CD8-positive, alpha-beta memory T cell (primary cell): ENCODE measurements at regions of chr1 and their contacts with region 1.

Region 1: DNA sequence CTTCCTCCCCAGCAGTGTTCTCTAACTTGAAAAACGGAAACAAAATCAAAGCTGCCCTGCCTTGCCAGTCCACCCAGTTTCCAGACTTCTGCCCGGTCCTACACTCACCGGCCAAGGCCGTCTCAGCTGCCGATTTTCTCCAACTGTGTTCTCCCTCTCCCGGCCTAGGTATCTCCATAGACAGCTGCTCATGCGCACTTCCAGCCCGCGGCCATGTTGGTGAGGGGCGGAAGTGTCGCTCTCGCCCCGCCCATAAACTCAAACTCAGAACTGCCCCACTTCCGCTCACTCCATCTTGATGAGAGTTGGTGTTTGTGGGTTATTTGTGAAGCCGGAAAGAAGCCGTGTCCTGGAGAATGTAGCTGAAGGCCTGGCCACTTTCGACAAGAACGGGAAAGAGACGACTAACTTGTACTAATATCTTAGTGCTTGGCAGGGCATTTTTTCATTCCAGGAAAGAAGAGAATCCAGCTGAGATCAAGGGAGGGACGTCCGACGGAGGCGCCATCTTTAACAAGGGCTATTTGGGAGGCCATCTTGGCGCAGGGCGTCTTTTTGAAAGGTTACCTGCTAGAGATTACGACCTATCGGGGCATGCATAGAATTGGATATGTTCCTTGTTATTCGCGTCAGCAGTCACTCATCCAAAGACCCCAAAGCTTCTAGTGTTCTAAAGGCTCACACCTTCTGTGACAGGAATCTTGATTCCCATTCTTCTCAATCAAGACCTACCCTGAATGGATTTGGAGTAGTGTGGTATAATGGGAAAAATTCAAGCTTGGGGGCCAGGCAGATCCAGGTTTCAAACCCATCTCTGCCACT is at the start of gene USF1:
- DNase-seq: peak; percentile 85 to 96 (median 93)
- H3K4me3 ChIP-seq: peak within 1 kb of the TSS; percentile 99
- H3K4me3 Mint-ChIP-seq: peak within 1 kb of the TSS; percentile 88 to 97 (median 92)
- H3K27ac ChIP-seq: peak within 1 kb of the TSS; percentile 94
- H3K27ac Mint-ChIP-seq: peak within 1 kb of the TSS; percentile 89 to 100 (median 99)
- H3K4me1 ChIP-seq: peaks cover 23% of the 10 kb centered on the region
- H3K4me1 Mint-ChIP-seq: peaks cover 32 to 62% (median 49%) of the 10 kb centered on the region in 3 donors
- H3K27me3 ChIP-seq: no peaks in the 10 kb centered on the region
- H3K27me3 Mint-ChIP-seq: no peaks in the 10 kb centered on the region
- total RNA-seq, gene USF1: 63.3 to 67.7 TPM

Region 2: GRCh38 chr1:160963521-160963920 is 82.4 kb before region 1 on chr1:
- CTCF ChIA-PET with region 1: no interaction called
- POLR2A ChIA-PET with region 1: no interaction called
- DNase-seq: no peak
- H3K4me3 ChIP-seq: no peak overlapping the region
- H3K4me3 Mint-ChIP-seq: no peak overlapping the region
- H3K27ac ChIP-seq: no peak overlapping the region
- H3K27ac Mint-ChIP-seq: no peak overlapping the region
- H3K4me1 ChIP-seq: no peaks in the 10 kb centered on the region
- H3K4me1 Mint-ChIP-seq: no peaks in the 10 kb centered on the region
- H3K27me3 ChIP-seq: no peaks in the 10 kb centered on the region
- H3K27me3 Mint-ChIP-seq: peaks cover 0 to 4% of the 10 kb centered on the region in 2 donors

Region 3: GRCh38 chr1:161013488-161014230 is 32.3 kb before region 1 on chr1:
- CTCF ChIA-PET with region 1: interaction called, 6 read pairs
- POLR2A ChIA-PET with region 1: interaction called, 15 read pairs
- DNase-seq: peak; percentile 39 to 76 (median 60)
- H3K4me3 ChIP-seq: peak overlapping the region; percentile 65
- H3K4me3 Mint-ChIP-seq: peak overlapping the region; percentile 67 to 90 (median 84)
- H3K27ac ChIP-seq: peak overlapping the region; percentile 71
- H3K27ac Mint-ChIP-seq: peak overlapping the region; percentile 90 to 99 (median 96)
- H3K4me1 ChIP-seq: peaks cover 34% of the 10 kb centered on the region
- H3K4me1 Mint-ChIP-seq: peaks cover 21 to 46% (median 27%) of the 10 kb centered on the region in 3 donors
- H3K27me3 ChIP-seq: no peaks in the 10 kb centered on the region
- H3K27me3 Mint-ChIP-seq: no peaks in the 10 kb centered on the region

Region 4: DNA sequence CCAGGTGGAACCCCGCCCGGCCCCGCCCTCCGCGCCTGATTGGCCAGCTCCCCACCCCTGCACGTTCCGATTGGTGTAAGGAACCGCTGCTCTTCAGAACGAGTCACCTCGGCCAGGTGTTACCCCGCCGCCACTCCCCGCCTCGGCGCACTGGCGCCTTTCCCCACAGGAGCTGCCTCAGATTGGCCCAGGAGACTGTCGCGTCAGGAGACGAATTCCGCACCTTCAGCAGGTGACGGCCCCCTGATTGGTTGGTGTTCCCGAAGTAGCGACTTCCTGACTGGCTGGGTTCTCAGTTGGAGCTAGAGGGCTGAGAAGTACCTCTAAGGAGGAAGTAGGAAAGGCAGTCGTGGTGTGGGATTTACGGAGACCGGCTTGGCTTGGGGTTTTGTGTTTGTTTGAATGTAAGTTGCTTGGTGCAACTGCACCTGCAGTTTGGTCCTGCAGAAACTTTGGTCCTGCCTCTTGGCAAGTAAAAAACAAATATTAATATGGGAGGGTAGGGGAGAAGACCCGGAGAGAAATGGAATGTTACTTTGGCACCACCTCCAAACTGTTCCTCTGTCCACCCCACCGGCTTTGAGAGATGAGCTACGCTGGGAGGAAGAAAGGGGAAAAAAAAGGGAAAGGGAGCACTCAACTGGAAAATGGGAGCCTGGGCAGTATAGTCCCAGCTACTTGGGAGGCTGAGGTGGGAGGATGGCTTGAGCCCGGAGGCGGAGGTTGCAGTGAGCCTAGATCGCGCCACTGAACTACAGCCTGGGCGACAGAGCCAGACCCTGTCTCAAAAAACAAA is 24.6 kb before region 1 on chr1:
- CTCF ChIA-PET with region 1: interaction called, 6 read pairs
- POLR2A ChIA-PET with region 1: interaction called, 18 read pairs
- DNase-seq: peak; percentile 85 to 95 (median 91)
- H3K4me3 ChIP-seq: peak overlapping the region; percentile 99
- H3K4me3 Mint-ChIP-seq: peak overlapping the region; percentile 85 to 94 (median 91)
- H3K27ac ChIP-seq: peak overlapping the region; percentile 71
- H3K27ac Mint-ChIP-seq: peak overlapping the region; percentile 66 to 97 (median 95)
- H3K4me1 ChIP-seq: peaks cover 26% of the 10 kb centered on the region
- H3K4me1 Mint-ChIP-seq: peaks cover 19 to 60% (median 40%) of the 10 kb centered on the region in 3 donors
- H3K27me3 ChIP-seq: no peaks in the 10 kb centered on the region
- H3K27me3 Mint-ChIP-seq: no peaks in the 10 kb centered on the region

Region 5: GRCh38 chr1:161071886-161072371 is 26.0 kb after region 1 on chr1:
- CTCF ChIA-PET with region 1: interaction called, 69 read pairs
- POLR2A ChIA-PET with region 1: interaction called, 81 read pairs
- DNase-seq: peak in 4 of 5 donors; percentile 24 to 66 (median 41)
- H3K4me3 ChIP-seq: no peak overlapping the region
- H3K4me3 Mint-ChIP-seq: peak overlapping the region in 1 of 7 donors; percentile 59
- H3K27ac ChIP-seq: no peak overlapping the region
- H3K27ac Mint-ChIP-seq: peak overlapping the region in 7 of 8 donors; percentile 17 to 88 (median 70)
- H3K4me1 ChIP-seq: peaks cover 34% of the 10 kb centered on the region
- H3K4me1 Mint-ChIP-seq: peaks cover 33 to 42% (median 41%) of the 10 kb centered on the region in 3 donors
- H3K27me3 ChIP-seq: no peaks in the 10 kb centered on the region
- H3K27me3 Mint-ChIP-seq: peaks cover 0 to 2% of the 10 kb centered on the region in 2 donors

Region 6: DNA sequence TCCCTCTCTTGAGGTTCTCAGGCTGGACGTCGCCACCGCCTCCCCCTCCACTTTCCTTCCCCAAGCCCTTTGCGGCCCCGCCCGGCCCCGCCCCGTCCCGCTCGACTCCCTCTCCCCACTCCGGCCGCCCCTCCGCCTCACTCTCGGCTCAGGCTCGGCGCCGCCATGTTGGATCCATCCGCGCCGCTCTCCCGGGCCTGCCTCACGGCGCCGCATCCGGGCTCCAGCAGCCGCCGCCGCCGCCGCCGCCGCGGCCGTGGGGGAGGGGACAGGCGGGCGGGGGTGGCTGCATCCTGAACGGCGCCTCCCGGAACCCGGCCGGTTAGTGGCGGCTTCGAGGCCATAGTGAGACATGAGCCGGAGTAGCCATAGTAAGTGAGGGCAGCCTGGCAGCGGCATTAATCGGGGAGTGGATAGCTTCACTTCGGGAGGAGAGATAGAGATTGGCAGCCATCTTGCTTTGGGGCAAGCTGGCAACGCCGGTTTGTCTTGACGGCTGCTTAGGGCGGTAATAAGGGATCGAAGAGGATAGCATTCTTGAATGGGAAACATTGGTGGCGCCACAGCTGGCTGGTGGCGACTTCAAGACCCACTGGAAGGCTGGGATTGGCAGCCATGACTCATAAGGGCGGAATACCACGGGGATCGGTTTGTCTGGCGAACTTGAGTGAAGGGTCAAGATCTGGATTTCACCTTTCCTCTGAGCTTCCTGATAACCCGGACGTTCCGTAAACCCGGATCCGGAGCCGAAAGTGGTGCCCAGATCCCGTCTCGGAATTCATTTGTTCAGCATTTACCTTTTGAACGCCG is 86.7 kb after region 1 on chr1 and contains the start of gene DEDD:
- CTCF ChIA-PET with region 1: interaction called, 4 read pairs
- POLR2A ChIA-PET with region 1: interaction called, 19 read pairs
- DNase-seq: peak; percentile 84 to 95 (median 91)
- H3K4me3 ChIP-seq: peak within 1 kb of the TSS; percentile 98
- H3K4me3 Mint-ChIP-seq: no peak within 1 kb of the TSS
- H3K27ac ChIP-seq: peak within 1 kb of the TSS; percentile 84
- H3K27ac Mint-ChIP-seq: peak within 1 kb of the TSS in 4 of 8 donors; percentile 91 to 98 (median 96)
- H3K4me1 ChIP-seq: peaks cover 35% of the 10 kb centered on the region
- H3K4me1 Mint-ChIP-seq: peaks cover 33 to 46% (median 44%) of the 10 kb centered on the region in 3 donors
- H3K27me3 ChIP-seq: no peaks in the 10 kb centered on the region
- H3K27me3 Mint-ChIP-seq: no peaks in the 10 kb centered on the region
- total RNA-seq, gene DEDD: 41.0 to 41.9 TPM

Region 7: DNA sequence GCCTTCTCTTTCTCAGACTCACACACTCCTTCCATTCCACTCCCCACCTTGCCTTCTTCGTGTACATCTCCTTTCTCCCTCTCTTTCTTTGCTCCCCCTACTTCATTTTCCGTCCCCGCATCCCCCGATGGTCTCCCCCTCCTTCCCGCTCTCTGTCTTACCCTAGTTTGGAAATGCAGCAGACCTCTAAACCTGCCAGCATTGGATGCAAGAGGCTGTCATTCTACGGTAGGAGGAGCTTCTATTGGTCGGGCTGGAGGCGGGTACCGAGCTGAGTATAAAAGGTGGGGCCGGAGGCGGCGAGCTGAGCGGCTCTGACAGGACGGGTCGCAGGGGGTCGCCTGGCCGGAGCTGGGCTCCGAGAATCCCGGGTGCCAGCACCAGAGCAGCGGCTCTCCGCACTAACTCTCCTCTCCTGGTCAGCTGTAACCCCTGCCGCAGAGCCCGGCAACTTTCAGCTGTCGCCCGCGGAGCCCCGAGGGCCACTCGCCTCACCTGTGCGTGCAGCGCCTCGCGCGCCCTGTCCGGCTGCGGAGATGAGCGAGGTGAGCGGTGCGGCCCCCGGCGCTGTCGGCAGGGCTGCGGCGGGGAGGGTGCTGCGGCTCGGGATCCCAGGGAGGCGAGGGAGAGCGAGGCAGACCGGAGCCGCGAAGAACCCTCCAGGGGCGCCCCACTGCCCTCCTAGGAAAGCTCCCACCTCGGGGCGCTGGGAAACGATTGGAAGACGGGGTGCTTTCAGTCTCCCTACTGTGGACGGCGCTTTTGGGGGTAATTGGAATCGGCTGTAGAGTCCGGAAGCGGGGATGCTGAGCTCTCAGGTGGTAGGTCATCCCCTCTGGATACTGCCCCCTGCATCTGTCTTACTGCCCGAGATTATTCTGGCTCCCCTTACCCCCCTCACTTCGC is 212.7 kb after region 1 on chr1 and contains the start of gene PCP4L1:
- CTCF ChIA-PET with region 1: no interaction called
- POLR2A ChIA-PET with region 1: no interaction called
- DNase-seq: peak in 3 of 5 donors; percentile 1 to 57 (median 34)
- H3K4me3 ChIP-seq: no peak within 1 kb of the TSS
- H3K4me3 Mint-ChIP-seq: peak within 1 kb of the TSS; percentile 41 to 90 (median 67)
- H3K27ac ChIP-seq: no peak within 1 kb of the TSS
- H3K27ac Mint-ChIP-seq: peak within 1 kb of the TSS in 2 of 8 donors; percentile 37 to 55
- H3K4me1 ChIP-seq: no peaks in the 10 kb centered on the region
- H3K4me1 Mint-ChIP-seq: peaks cover 10 to 19% (median 15%) of the 10 kb centered on the region in 3 donors
- H3K27me3 ChIP-seq: peaks cover 25% of the 10 kb centered on the region
- H3K27me3 Mint-ChIP-seq: peaks cover 49 to 77% of the 10 kb centered on the region in 2 donors
- total RNA-seq, gene PCP4L1: not detected